ENCODE measurements at regions of chr21 and their contacts with region 1.

Region 1: DNA sequence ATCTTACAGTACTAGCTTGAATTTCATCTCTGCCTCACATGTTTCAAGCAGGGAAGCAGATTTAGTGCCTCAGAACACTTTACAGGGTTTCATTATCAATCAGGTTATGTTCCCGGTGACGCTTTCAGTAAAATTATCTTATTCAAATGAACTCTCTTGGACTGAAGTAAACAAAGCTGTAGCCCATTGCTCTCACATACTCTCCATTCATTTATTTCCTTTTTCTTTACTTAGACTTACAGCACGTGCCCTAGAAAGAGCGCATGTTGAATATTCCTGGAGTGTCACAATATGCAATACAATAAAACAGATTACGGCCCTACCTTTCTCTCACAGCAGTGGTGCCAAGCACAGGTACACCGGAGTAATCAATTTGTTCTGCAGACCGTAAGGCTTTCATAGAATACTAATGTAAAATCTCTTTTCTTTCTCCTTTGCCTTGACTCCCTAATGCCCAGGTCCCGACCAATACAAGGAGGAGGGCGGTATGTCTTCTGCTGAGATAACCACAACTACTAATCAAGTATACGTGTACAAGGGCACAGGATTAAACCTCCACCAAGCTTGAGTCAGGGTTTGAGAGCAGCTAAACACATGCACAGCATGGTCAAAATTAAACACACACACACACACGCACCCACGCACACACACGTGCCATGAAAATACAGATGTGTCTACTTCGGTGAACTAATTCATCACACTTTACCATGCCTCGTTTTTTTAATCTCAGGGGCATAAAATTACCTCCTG is 62.8 kb downstream of the NRIP1 start:
- DNase-seq: no peak
- ATAC-seq: no peak
- H3K4me3 ChIP-seq: no peak overlapping the region
- H3K4me3 Mint-ChIP-seq: no peak overlapping the region
- H3K27ac ChIP-seq: no peak overlapping the region
- H3K27ac Mint-ChIP-seq: no peak overlapping the region
- H3K4me1 ChIP-seq: peaks cover 31% of the 10 kb centered on the region
- H3K4me1 Mint-ChIP-seq: peaks cover 58% of the 10 kb centered on the region
- H3K27me3 ChIP-seq: no peaks in the 10 kb centered on the region
- H3K27me3 Mint-ChIP-seq: no peaks in the 10 kb centered on the region
- CTCF ChIP-seq: no peak

Region 2: GRCh38 chr21:15037095-15037899 is 35.3 kb after region 1 on chr21:
- CTCF ChIA-PET with region 1: no interaction called
- POLR2A ChIA-PET with region 1: no interaction called
- intact Hi-C with region 1: loop called in 1 of 2 experiments (anchors 5 kb)
- DNase-seq: no peak
- ATAC-seq: no peak
- H3K4me3 ChIP-seq: no peak overlapping the region
- H3K4me3 Mint-ChIP-seq: no peak overlapping the region
- H3K27ac ChIP-seq: no peak overlapping the region
- H3K27ac Mint-ChIP-seq: no peak overlapping the region
- H3K4me1 ChIP-seq: peaks cover 5% of the 10 kb centered on the region
- H3K4me1 Mint-ChIP-seq: peaks cover 36% of the 10 kb centered on the region
- H3K27me3 ChIP-seq: no peaks in the 10 kb centered on the region
- H3K27me3 Mint-ChIP-seq: no peaks in the 10 kb centered on the region
- CTCF ChIP-seq: no peak

Measured in CD8-positive, alpha-beta T cell (primary cell).